ENCODE measurements at regions of chr11 and their contacts with region 1.

Region 1: GRCh38 chr11:8911029-8911826 is at the start of gene AKIP1:
- DNase-seq: peak; percentile 98
- H3K4me3 ChIP-seq: peak within 1 kb of the TSS; percentile 63 to 95 (median 82)
- H3K27ac ChIP-seq: peak within 1 kb of the TSS; percentile 63
- H3K4me1 ChIP-seq: peaks cover 32% of the 10 kb centered on the region
- H3K27me3 ChIP-seq: no peaks in the 10 kb centered on the region
- CTCF ChIP-seq: no peak
- POLR2A ChIP-seq: peak; percentile 42
- total RNA-seq, gene AKIP1: 21.9 and 23.4 TPM in 2 replicates

Region 2: GRCh38 chr11:8688414-8689362 is 222.5 kb before region 1 on chr11:
- CTCF ChIA-PET with region 1: interaction called, 3 read pairs
- POLR2A ChIA-PET with region 1: interaction called, 5 read pairs
- dilution Hi-C with region 1: no loop called
- intact Hi-C with region 1: loop called (anchors 2 kb)
- DNase-seq: peak; percentile 93
- H3K4me3 ChIP-seq: peak overlapping the region; percentile 45 to 86 (median 53)
- H3K27ac ChIP-seq: peak overlapping the region; percentile 65
- H3K4me1 ChIP-seq: peaks cover 46% of the 10 kb centered on the region
- H3K27me3 ChIP-seq: no peaks in the 10 kb centered on the region
- CTCF ChIP-seq: no peak
- POLR2A ChIP-seq: peak; percentile 99

Region 3: DNA sequence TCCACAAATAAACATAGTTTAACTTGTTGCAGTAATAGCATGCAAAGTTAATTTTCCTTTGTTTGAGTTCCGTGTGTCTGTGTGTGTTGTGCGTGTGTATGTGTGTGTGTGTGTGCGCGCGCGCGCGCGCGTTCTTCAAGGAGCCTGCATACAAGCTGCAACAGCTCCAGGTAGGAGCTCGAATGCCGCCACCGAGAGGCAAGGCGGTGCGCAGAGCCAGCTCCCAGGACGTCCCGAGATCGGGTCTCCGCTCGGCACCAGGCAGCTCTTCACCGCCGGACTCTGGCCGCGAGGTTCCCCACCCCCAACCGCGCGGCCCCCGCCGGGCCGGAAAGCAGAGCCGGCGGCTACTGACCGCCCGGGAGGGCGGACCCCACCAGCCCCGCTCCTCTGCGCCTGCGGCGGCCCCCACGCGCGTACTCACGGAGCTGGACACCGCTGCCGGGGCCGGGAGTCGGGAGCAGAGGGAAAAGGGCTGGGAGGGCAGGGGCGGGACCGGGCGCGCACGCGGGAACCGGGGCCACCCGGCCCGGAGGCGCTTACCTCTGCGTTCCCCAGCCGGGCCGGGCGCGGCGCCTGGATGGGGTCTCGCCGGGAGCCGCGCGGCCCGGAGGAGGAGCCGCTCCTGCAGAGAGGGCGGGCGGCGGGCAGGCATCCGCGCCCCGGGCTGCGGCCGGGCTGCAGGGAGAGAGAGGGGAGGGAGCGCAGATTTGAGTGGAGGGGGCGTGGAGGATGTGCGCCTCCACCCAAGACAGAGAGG is 40.6 kb before region 1 on chr11:
- CTCF ChIA-PET with region 1: interaction called, 11 read pairs
- POLR2A ChIA-PET with region 1: no interaction called
- dilution Hi-C with region 1: no loop called
- intact Hi-C with region 1: loop called (anchors 2 kb)
- DNase-seq: peak; percentile 68
- H3K4me3 ChIP-seq: peak overlapping the region; percentile 6 to 50 (median 39)
- H3K27ac ChIP-seq: no peak overlapping the region
- H3K4me1 ChIP-seq: peaks cover 20% of the 10 kb centered on the region
- H3K27me3 ChIP-seq: no peaks in the 10 kb centered on the region
- CTCF ChIP-seq: no peak
- POLR2A ChIP-seq: no peak

Region 4: GRCh38 chr11:8922691-8923090 is 11.5 kb after region 1 on chr11:
- CTCF ChIA-PET with region 1: interaction called, 10 read pairs
- POLR2A ChIA-PET with region 1: interaction called, 4 read pairs
- dilution Hi-C with region 1: no loop called
- intact Hi-C with region 1: no loop called
- DNase-seq: no peak
- H3K4me3 ChIP-seq: no peak overlapping the region
- H3K27ac ChIP-seq: no peak overlapping the region
- H3K4me1 ChIP-seq: no peaks in the 10 kb centered on the region
- H3K27me3 ChIP-seq: no peaks in the 10 kb centered on the region
- CTCF ChIP-seq: no peak
- POLR2A ChIP-seq: no peak

Region 5: DNA sequence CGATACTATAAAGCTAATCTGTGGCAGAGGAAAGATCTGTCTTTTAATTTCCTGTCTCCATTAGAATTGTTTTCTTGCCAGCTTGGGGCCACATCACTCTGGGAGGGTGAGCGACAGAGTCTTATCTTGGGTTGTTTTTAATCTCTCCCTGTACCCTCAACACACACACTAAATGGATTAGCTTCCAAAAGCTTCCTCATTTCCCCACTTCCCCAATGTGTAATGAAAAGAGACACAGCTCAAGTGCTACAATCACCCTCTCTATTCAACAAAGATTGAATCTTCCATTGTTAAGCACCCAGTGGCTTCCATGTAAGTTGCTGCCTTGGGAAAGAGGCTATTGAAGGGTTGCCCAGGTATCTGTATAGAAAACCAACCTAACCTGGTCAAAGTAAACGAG is 37.7 kb after region 1 on chr11:
- CTCF ChIA-PET with region 1: interaction called, 11 read pairs
- POLR2A ChIA-PET with region 1: no interaction called
- dilution Hi-C with region 1: no loop called
- intact Hi-C with region 1: no loop called
- DNase-seq: peak; percentile 9
- H3K4me3 ChIP-seq: no peak overlapping the region
- H3K27ac ChIP-seq: no peak overlapping the region
- H3K4me1 ChIP-seq: no peaks in the 10 kb centered on the region
- H3K27me3 ChIP-seq: no peaks in the 10 kb centered on the region
- CTCF ChIP-seq: no peak
- POLR2A ChIP-seq: no peak

Region 6: GRCh38 chr11:9003573-9004309 is 92.5 kb after region 1 on chr11 and contains the start of gene NRIP3:
- CTCF ChIA-PET with region 1: interaction called, 3 read pairs
- POLR2A ChIA-PET with region 1: no interaction called
- dilution Hi-C with region 1: no loop called
- intact Hi-C with region 1: loop called (anchors 5 kb)
- DNase-seq: peak; percentile 58
- H3K4me3 ChIP-seq: peak within 1 kb of the TSS; percentile 18 to 57 (median 33)
- H3K27ac ChIP-seq: peak within 1 kb of the TSS; percentile 17
- H3K4me1 ChIP-seq: peaks cover 26% of the 10 kb centered on the region
- H3K27me3 ChIP-seq: peaks cover 23 to 28% of the 10 kb centered on the region in 2 experiments
- CTCF ChIP-seq: no peak
- POLR2A ChIP-seq: peak; percentile 67
- total RNA-seq, gene NRIP3: 8.4 and 9.9 TPM in 2 replicates

Measured in endothelial cell of umbilical vein (primary cell).